Cardiac septum (tissue), 1 donor: ENCODE measurements at regions of chr15 and their contacts with region 1.

Region 1: GRCh38 chr15:65384895-65385858 is 7.4 kb upstream of the IGDCC3 start:
- DNase-seq: peak; percentile 91

Region 2: GRCh38 chr15:65209701-65210618 is 175.2 kb before region 1 on chr15:
- intact Hi-C with region 1: loop called (anchors 10 kb)
- DNase-seq: no peak

Region 3: GRCh38 chr15:65318870-65319356 is 66.3 kb before region 1 on chr15:
- intact Hi-C with region 1: loop called (anchors 1 kb)
- DNase-seq: peak; percentile 87